ENCODE measurements at regions of chr22 and their contacts with region 1.

Region 1: GRCh38 chr22:17121227-17122195 is at the start of gene TMEM121B:
- DNase-seq: peak; percentile 83 to 91 (median 89)
- ATAC-seq: peak; percentile 47 to 88 (median 84)
- H3K4me3 ChIP-seq: peak within 1 kb of the TSS; percentile 55 to 79 (median 65)
- H3K27ac ChIP-seq: peak within 1 kb of the TSS; percentile 46 to 87 (median 64)
- H3K4me1 ChIP-seq: peaks cover 0 to 48% (median 19%) of the 10 kb centered on the region in 12 donors
- H3K27me3 ChIP-seq: peaks cover 0 to 13% (median 0%) of the 10 kb centered on the region in 9 donors
- CTCF ChIP-seq: no peak
- POLR2A ChIP-seq: no peak
- total RNA-seq, gene TMEM121B: 1.1 to 3.3 (median 1.8) TPM

Region 2: GRCh38 chr22:17131686-17132085 is 10.2 kb after region 1 on chr22:
- intact Hi-C with region 1: loop called in 1 of 10 experiments (anchors 1 kb)
- DNase-seq: peak in 2 of 5 donors; percentile 45 to 51
- ATAC-seq: peak; percentile 67 to 79 (median 72)
- H3K4me3 ChIP-seq: peak overlapping the region in 5 of 12 donors; percentile 5 to 26 (median 19)
- H3K27ac ChIP-seq: peak overlapping the region in 8 of 12 donors; percentile 3 to 76 (median 51)
- H3K4me1 ChIP-seq: peaks cover 0 to 18% (median 8%) of the 10 kb centered on the region in 12 donors
- H3K27me3 ChIP-seq: no peaks in the 10 kb centered on the region
- CTCF ChIP-seq: peak in 2 of 12 donors; percentile 13 to 20
- POLR2A ChIP-seq: no peak

Region 3: GRCh38 chr22:17158568-17159503 is 37.3 kb after region 1 on chr22 and contains the start of gene HDHD5:
- intact Hi-C with region 1: loop called in 2 of 10 experiments (anchors 2 to 5 kb)
- DNase-seq: peak; percentile 92 to 96 (median 93)
- ATAC-seq: peak; percentile 84 to 95 (median 93)
- H3K4me3 ChIP-seq: peak within 1 kb of the TSS; percentile 69 to 94 (median 80)
- H3K27ac ChIP-seq: peak within 1 kb of the TSS; percentile 82 to 97 (median 92)
- H3K4me1 ChIP-seq: peaks cover 0 to 40% (median 25%) of the 10 kb centered on the region in 12 donors
- H3K27me3 ChIP-seq: no peaks in the 10 kb centered on the region
- CTCF ChIP-seq: peak in 2 of 12 donors; percentile 6 to 18
- POLR2A ChIP-seq: peak in 1 of 2 donors; percentile 49
- total RNA-seq, gene HDHD5: 35.7 to 60.3 (median 49.0) TPM

Region 4: GRCh38 chr22:17164392-17165024 is 43.0 kb after region 1 on chr22:
- intact Hi-C with region 1: loop called in 3 of 10 experiments (anchors 2 to 5 kb)
- DNase-seq: no peak
- ATAC-seq: no peak
- H3K4me3 ChIP-seq: no peak overlapping the region
- H3K27ac ChIP-seq: no peak overlapping the region
- H3K4me1 ChIP-seq: peaks cover 0 to 23% (median 7%) of the 10 kb centered on the region in 12 donors
- H3K27me3 ChIP-seq: no peaks in the 10 kb centered on the region
- CTCF ChIP-seq: peak in 1 of 12 donors; percentile 12
- POLR2A ChIP-seq: no peak

Measured in heart left ventricle (tissue), 16 donors.